Heart right ventricle (tissue), 16 donors: ENCODE measurements at regions of chr4 and their contacts with region 1.

Region 1: GRCh38 chr4:140326395-140326993 is 47.0 kb upstream of the SCOC start:
- DNase-seq: peak in 1 of 2 donors; percentile 28
- ATAC-seq: peak in 5 of 8 donors; percentile 67 to 85 (median 70)
- H3K4me3 ChIP-seq: no peak overlapping the region
- H3K27ac ChIP-seq: no peak overlapping the region
- H3K4me1 ChIP-seq: peaks cover 0 to 9% (median 0%) of the 10 kb centered on the region in 9 donors
- H3K27me3 ChIP-seq: no peaks in the 10 kb centered on the region
- CTCF ChIP-seq: peak; percentile 36 to 81 (median 68)

Region 2: GRCh38 chr4:139728840-139729239 is 597.7 kb before region 1 on chr4:
- intact Hi-C with region 1: loop called in 5 of 10 experiments (anchors 5 to 10 kb)
- DNase-seq: no peak
- ATAC-seq: no peak
- H3K4me3 ChIP-seq: no peak overlapping the region
- H3K27ac ChIP-seq: no peak overlapping the region
- H3K4me1 ChIP-seq: peaks cover 0 to 24% (median 14%) of the 10 kb centered on the region in 9 donors
- H3K27me3 ChIP-seq: no peaks in the 10 kb centered on the region
- CTCF ChIP-seq: no peak

Region 3: GRCh38 chr4:140012688-140013486 is 313.6 kb before region 1 on chr4:
- intact Hi-C with region 1: loop called in 7 of 10 experiments (anchors 2 to 10 kb)
- DNase-seq: peak; percentile 19 to 66
- ATAC-seq: peak; percentile 44 to 94 (median 89)
- H3K4me3 ChIP-seq: peak overlapping the region in 1 of 10 donors; percentile 17
- H3K27ac ChIP-seq: no peak overlapping the region
- H3K4me1 ChIP-seq: peaks cover 0 to 12% (median 0%) of the 10 kb centered on the region in 9 donors
- H3K27me3 ChIP-seq: no peaks in the 10 kb centered on the region
- CTCF ChIP-seq: peak; percentile 29 to 73 (median 65)

Region 4: GRCh38 chr4:140186651-140187315 is 139.7 kb before region 1 on chr4:
- intact Hi-C with region 1: no loop called
- DNase-seq: no peak
- ATAC-seq: peak in 1 of 8 donors; percentile 25
- H3K4me3 ChIP-seq: no peak overlapping the region
- H3K27ac ChIP-seq: no peak overlapping the region
- H3K4me1 ChIP-seq: peaks cover 0 to 4% (median 0%) of the 10 kb centered on the region in 9 donors
- H3K27me3 ChIP-seq: no peaks in the 10 kb centered on the region
- CTCF ChIP-seq: no peak